Mammary epithelial cell (primary cell): ENCODE measurements at regions of chr13 and their contacts with region 1.

Region 1: DNA sequence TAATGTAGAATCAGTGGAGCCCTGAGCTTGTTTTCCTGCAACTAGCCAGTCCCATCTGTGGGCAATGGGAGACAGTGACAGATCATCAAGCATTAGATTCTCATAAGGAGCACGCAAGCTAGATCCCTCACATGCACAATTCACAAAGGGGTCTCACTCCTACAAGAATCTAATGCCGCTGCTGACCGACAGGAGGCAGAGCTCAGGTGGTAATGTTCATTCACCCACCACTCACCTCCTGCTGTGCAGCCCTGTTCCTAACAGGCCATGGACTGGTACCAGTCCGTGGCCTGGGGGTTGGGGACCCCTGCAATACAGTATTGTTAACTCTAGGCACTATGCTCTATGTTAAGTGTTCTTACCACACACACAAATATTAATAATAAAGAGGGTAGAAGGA is 362.8 kb downstream of the RBM26 start:
- DNase-seq: no peak
- H3K4me3 ChIP-seq: no peak overlapping the region
- H3K27ac ChIP-seq: no peak overlapping the region
- H3K4me1 ChIP-seq: no peaks in the 10 kb centered on the region
- H3K27me3 ChIP-seq: peaks cover 4% of the 10 kb centered on the region
- CTCF ChIP-seq: no peak

Region 2: DNA sequence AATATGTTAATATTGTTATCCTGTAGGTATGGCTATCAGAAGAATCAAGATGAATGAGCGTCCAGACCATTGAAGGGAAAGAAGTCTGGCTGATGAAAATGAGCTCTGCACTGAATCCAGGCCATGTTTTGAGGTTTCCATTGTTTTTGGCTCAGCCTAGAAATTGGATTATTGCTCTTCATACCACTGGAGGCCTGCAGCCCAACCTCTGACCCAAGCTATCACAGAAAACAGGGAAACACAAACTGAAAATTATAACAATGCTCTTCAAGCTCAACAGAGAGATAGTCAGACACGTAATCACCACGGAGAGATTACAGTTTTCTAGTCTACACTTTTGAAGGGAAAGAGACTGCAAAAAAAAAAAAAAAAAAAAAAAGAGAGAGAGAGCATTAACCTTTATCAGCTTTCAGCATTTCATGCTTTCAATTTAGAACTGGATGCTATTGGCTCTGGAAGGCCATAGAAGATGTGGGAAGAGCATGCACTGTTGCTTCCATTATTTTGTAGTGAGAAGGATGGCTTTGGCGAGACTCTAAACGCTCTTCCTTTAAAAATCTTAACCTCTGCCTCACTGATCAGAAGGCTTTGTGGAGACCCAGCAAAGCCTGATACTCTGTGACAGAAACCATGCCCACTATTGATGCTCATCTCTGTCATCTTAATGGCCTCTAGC is 1135.4 kb before region 1 on chr13:
- CTCF ChIA-PET with region 1: no interaction called
- dilution Hi-C with region 1: no loop called
- in situ Hi-C with region 1: no loop called
- intact Hi-C with region 1: no loop called
- DNase-seq: no peak
- H3K4me3 ChIP-seq: no peak overlapping the region
- H3K27ac ChIP-seq: no peak overlapping the region
- H3K4me1 ChIP-seq: no peaks in the 10 kb centered on the region
- H3K27me3 ChIP-seq: no peaks in the 10 kb centered on the region
- CTCF ChIP-seq: no peak

Region 3: DNA sequence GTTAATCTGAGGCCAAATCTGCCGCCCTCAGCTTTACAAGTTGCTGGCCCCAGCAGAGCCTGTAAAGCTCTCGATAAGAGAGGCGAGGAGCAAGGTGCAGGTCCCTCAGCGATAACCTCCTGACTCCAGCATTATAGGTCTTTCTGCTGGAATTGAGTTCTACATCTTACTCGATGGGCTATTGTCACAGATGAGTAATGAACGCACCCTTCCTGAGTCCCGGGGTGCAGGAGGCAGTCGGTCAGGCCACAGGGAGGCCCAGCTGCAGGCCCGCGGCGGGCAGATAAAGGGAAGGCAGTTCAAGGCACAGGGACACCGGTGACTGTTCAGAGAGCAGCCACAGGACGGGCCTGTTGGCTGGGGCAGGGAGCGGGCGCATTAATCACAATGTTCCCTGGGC is 226.6 kb before region 1 on chr13:
- CTCF ChIA-PET with region 1: no interaction called
- dilution Hi-C with region 1: no loop called
- in situ Hi-C with region 1: no loop called
- intact Hi-C with region 1: no loop called
- DNase-seq: no peak
- H3K4me3 ChIP-seq: no peak overlapping the region
- H3K27ac ChIP-seq: no peak overlapping the region
- H3K4me1 ChIP-seq: no peaks in the 10 kb centered on the region
- H3K27me3 ChIP-seq: no peaks in the 10 kb centered on the region
- CTCF ChIP-seq: no peak

Region 4: DNA sequence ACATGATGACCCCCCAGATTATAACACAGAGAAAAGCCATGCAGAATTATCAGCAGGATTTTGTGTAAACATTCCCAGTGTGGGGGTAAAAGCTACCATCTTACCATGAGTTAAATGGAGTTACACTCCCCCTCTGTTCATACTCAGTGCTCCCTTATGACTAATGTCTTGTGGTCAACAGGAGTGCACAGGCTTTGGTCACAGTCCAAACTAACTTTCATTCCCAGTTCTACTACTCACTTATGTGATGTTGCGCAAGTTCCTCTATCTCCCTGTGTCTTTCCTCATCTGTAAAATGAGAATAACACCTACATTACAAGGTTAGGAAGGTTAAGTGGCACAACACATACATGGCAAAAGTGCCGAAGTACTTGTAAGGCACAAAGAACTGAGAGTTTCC is 85.0 kb after region 1 on chr13:
- CTCF ChIA-PET with region 1: no interaction called
- dilution Hi-C with region 1: no loop called
- in situ Hi-C with region 1: no loop called
- intact Hi-C with region 1: loop called (anchors 5 kb)
- DNase-seq: peak; percentile 92
- H3K4me3 ChIP-seq: no peak overlapping the region
- H3K27ac ChIP-seq: no peak overlapping the region
- H3K4me1 ChIP-seq: peaks cover 17% of the 10 kb centered on the region
- H3K27me3 ChIP-seq: peaks cover 3% of the 10 kb centered on the region
- CTCF ChIP-seq: no peak

Region 5: DNA sequence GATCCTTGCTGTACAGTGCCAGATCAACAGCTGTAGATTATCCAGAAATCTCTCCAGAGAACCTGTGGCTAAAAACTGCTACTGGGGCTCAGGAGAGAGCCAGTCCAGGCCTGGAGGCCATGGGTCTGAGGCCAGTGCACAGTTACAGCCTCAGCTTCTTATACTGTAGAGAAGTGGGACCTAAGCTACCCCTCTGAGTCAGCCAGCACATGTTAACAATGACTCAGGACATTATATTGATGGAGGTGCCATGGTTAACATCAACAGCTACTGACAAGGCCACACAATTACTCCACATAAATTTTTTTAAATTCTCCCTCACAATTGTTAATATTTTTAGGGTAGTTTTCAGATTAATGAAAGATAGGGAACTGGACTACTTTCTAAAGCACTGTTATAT is 224.4 kb after region 1 on chr13:
- CTCF ChIA-PET with region 1: no interaction called
- dilution Hi-C with region 1: no loop called
- in situ Hi-C with region 1: no loop called
- intact Hi-C with region 1: no loop called
- DNase-seq: no peak
- H3K4me3 ChIP-seq: no peak overlapping the region
- H3K27ac ChIP-seq: no peak overlapping the region
- H3K4me1 ChIP-seq: no peaks in the 10 kb centered on the region
- H3K27me3 ChIP-seq: no peaks in the 10 kb centered on the region
- CTCF ChIP-seq: no peak